PC-9 (cell line): ENCODE measurements at regions of chr17 and their contacts with region 1.

Region 1: GRCh38 chr17:7329374-7329996 is 350 bp upstream of the NEURL4 start:
- DNase-seq: peak; percentile 94 to 98
- H3K4me3 ChIP-seq: peak overlapping the region; percentile 100
- H3K27ac ChIP-seq: peak overlapping the region; percentile 67
- H3K4me1 ChIP-seq: peaks cover 16% of the 10 kb centered on the region
- H3K27me3 ChIP-seq: no peaks in the 10 kb centered on the region
- CTCF ChIP-seq: no peak

Region 2: DNA sequence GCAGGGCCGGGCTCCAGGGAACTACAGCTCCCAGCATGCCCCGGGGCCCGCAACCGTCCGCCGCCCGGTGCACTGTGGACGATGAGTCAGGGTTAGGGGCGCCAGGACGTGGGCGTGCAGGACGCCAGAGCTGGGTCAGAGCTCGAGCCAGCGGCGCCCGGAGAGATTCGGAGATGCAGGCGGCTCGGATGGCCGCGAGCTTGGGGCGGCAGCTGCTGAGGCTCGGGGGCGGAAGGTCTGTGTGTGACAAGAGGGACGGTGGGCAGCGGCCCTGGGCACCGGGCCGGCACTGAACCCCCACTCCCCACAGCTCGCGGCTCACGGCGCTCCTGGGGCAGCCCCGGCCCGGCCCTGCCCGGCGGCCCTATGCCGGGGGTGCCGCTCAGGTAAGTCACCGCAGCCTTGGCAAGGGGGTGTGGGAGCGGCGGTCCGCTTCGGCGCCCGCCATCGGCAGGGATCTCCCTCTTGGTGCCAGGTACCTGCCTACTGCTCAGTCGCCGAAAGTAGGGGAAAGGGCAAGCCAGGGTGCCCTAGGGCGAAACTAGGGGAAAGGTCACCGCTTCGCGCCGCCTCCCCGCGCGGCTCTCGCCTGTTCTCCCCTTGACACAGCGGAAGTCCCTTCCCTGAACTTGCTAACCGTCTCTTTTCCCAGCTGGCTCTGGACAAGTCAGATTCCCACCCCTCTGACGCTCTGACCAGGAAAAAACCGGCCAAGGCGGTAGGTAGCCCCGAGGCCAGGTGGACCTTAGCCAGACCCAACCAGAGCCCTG is 109.5 kb before region 1 on chr17 and contains the starts of genes ACADVL and DLG4:
- CTCF ChIA-PET with region 1: no interaction called
- POLR2A ChIA-PET with region 1: interaction called, 11 read pairs
- intact Hi-C with region 1: no loop called
- DNase-seq: peak; percentile 95 to 98
- H3K4me3 ChIP-seq: peak within 1 kb of the TSS; percentile 77
- H3K27ac ChIP-seq: peak within 1 kb of the TSS; percentile 98
- H3K4me1 ChIP-seq: peaks cover 36% of the 10 kb centered on the region
- H3K27me3 ChIP-seq: no peaks in the 10 kb centered on the region
- CTCF ChIP-seq: no peak
- total RNA-seq, gene ACADVL: 531 and 604 TPM in 2 replicates
- total RNA-seq, gene DLG4: 27.1 and 32.8 TPM in 2 replicates

Region 3: GRCh38 chr17:7266784-7267183 is 62.7 kb before region 1 on chr17:
- CTCF ChIA-PET with region 1: no interaction called
- POLR2A ChIA-PET with region 1: interaction called, 10 read pairs
- intact Hi-C with region 1: no loop called
- DNase-seq: no peak
- H3K4me3 ChIP-seq: no peak overlapping the region
- H3K27ac ChIP-seq: no peak overlapping the region
- H3K4me1 ChIP-seq: peaks cover 25% of the 10 kb centered on the region
- H3K27me3 ChIP-seq: no peaks in the 10 kb centered on the region
- CTCF ChIP-seq: no peak

Region 4: GRCh38 chr17:7314719-7315569 is 14.5 kb before region 1 on chr17 and contains the start of gene GPS2:
- CTCF ChIA-PET with region 1: interaction called, 11 read pairs
- POLR2A ChIA-PET with region 1: interaction called, 13 read pairs
- intact Hi-C with region 1: no loop called
- DNase-seq: peak; percentile 80 to 94
- H3K4me3 ChIP-seq: peak within 1 kb of the TSS; percentile 97
- H3K27ac ChIP-seq: peak within 1 kb of the TSS; percentile 64
- H3K4me1 ChIP-seq: peaks cover 40% of the 10 kb centered on the region
- H3K27me3 ChIP-seq: no peaks in the 10 kb centered on the region
- CTCF ChIP-seq: no peak
- total RNA-seq, gene GPS2: 43.5 and 61.3 TPM in 2 replicates